MCF 10A (cell line): ENCODE measurements at regions of chr20 and their contacts with region 1.

Region 1: DNA sequence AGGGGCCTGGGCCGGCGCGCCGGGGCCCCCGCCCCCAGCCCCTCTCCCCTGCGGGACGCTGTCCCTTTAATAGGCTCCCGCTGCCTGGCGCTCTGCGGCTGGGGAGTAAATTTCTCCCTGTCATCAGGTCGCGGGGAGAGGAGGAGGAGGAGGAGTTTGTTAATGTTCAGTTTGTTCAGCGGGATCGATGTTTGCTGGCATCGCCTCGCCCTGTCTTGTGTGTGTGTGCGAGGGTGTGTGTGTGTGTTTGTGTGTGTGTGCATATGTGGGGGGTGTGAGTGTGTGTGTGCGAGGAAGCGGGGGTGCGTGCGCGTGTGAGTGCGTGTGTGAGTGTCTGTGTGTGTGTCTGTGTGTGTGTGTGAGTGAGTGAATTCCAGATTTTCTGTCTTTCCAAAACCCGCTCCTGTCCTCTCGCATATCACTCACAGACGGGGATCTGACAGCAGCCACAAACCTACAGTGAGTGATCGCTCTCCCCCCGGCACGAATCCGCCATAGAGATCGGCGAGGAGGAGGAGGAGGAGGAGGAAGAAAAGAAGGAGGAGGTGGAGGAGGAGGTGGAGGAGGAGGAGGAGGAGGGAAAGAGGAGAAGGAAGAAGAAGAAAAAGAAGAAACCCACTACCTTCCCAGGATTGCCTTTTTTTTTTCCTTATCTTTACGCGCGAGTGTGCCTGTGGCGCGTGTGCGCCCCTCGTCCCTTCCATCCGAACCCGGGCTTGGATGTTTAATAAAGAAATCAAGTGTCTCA is at the start of gene TSHZ2:
- DNase-seq: peak; percentile 31
- H3K4me3 Mint-ChIP-seq: peak within 1 kb of the TSS; percentile 92
- H3K27ac Mint-ChIP-seq: peak within 1 kb of the TSS; percentile 52
- H3K4me1 Mint-ChIP-seq: peaks cover 23% of the 10 kb centered on the region
- H3K27me3 Mint-ChIP-seq: no peaks in the 10 kb centered on the region
- CTCF ChIP-seq: no peak
- total RNA-seq, gene TSHZ2: 1.6 and 2.3 TPM in 2 replicates

Region 2: GRCh38 chr20:52923123-52923937 is 49.0 kb before region 1 on chr20:
- CTCF ChIA-PET with region 1: interaction called, 4 read pairs
- POLR2A ChIA-PET with region 1: interaction called, 18 read pairs
- intact Hi-C with region 1: loop called (anchors 2 kb)
- DNase-seq: peak; percentile 98
- H3K4me3 Mint-ChIP-seq: peak overlapping the region; percentile 56
- H3K27ac Mint-ChIP-seq: peak overlapping the region; percentile 89
- H3K4me1 Mint-ChIP-seq: peaks cover 44% of the 10 kb centered on the region
- H3K27me3 Mint-ChIP-seq: no peaks in the 10 kb centered on the region
- CTCF ChIP-seq: no peak

Region 3: GRCh38 chr20:53032478-53032932 is 60.1 kb after region 1 on chr20:
- CTCF ChIA-PET with region 1: interaction called, 10 read pairs
- POLR2A ChIA-PET with region 1: interaction called, 3 read pairs
- intact Hi-C with region 1: no loop called
- DNase-seq: peak; percentile 93
- H3K4me3 Mint-ChIP-seq: peak overlapping the region; percentile 38
- H3K27ac Mint-ChIP-seq: peak overlapping the region; percentile 88
- H3K4me1 Mint-ChIP-seq: peaks cover 27% of the 10 kb centered on the region
- H3K27me3 Mint-ChIP-seq: no peaks in the 10 kb centered on the region
- CTCF ChIP-seq: no peak

Region 4: DNA sequence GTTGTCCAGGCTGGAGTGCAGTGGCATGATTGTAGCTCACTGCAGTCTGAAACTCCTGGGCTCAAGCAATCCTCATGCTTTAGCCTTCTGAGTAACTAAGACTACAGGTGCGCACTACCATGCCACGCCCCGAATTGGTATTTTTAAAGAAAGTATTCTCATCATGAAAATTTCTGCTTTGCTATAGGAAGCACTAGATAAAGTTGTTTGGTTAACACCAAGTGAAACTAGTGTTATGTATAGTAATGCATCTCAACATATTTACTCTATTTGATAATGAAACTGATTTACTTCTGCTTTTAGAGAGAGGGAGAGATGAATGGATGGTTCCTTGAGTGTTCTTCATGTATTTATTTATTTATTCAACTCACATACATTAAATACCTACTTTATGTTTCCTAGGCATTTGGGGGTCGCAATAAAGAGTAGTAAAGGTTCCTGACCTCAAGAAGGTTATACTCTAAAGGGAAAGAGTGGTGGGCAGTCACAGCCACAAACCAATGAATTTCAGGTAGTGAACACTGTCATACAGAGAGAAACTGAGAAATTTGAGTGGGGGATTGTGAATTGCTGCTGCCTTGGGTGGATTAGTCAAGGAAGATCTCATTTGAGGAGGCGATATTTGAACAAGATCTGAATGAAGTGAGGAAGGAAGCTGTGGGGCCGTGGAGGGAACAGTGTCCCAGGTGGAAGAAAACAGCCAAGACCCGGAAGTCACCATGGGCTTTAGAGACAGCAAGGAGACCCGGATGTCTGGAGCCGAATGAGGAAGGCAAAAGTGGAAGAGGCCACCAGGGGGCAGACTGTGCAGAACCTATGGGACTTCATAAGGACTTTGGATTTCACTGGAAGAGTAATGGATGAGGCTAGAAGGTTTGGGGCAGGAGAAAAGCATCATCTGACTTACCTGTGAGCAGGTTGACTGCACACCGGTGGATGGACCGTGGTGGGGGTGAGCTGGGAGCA is 185.4 kb after region 1 on chr20:
- CTCF ChIA-PET with region 1: interaction called, 3 read pairs
- POLR2A ChIA-PET with region 1: interaction called, 4 read pairs
- intact Hi-C with region 1: loop called (anchors 2 kb)
- DNase-seq: peak; percentile 54
- H3K4me3 Mint-ChIP-seq: no peak overlapping the region
- H3K27ac Mint-ChIP-seq: no peak overlapping the region
- H3K4me1 Mint-ChIP-seq: peaks cover 7% of the 10 kb centered on the region
- H3K27me3 Mint-ChIP-seq: no peaks in the 10 kb centered on the region
- CTCF ChIP-seq: peak; percentile 51

Region 5: GRCh38 chr20:53253668-53254067 is 281.3 kb after region 1 on chr20:
- CTCF ChIA-PET with region 1: no interaction called
- POLR2A ChIA-PET with region 1: no interaction called
- intact Hi-C with region 1: no loop called
- DNase-seq: no peak
- H3K4me3 Mint-ChIP-seq: no peak overlapping the region
- H3K27ac Mint-ChIP-seq: no peak overlapping the region
- H3K4me1 Mint-ChIP-seq: no peaks in the 10 kb centered on the region
- H3K27me3 Mint-ChIP-seq: no peaks in the 10 kb centered on the region
- CTCF ChIP-seq: no peak